AG04449 (cell line): ENCODE measurements at regions of chr14 and their contacts with region 1.

Region 1: GRCh38 chr14:23555882-23556699 is at the start of gene THTPA:
- DNase-seq: no peak
- H3K4me3 ChIP-seq: peak within 1 kb of the TSS; percentile 82
- CTCF ChIP-seq: no peak

Region 2: GRCh38 chr14:23478111-23478759 is 77.9 kb before region 1 on chr14:
- CTCF ChIA-PET with region 1: interaction called, 910 read pairs
- POLR2A ChIA-PET with region 1: interaction called, 5 read pairs
- DNase-seq: peak; percentile 33
- H3K4me3 ChIP-seq: no peak overlapping the region
- CTCF ChIP-seq: peak; percentile 50

Region 3: DNA sequence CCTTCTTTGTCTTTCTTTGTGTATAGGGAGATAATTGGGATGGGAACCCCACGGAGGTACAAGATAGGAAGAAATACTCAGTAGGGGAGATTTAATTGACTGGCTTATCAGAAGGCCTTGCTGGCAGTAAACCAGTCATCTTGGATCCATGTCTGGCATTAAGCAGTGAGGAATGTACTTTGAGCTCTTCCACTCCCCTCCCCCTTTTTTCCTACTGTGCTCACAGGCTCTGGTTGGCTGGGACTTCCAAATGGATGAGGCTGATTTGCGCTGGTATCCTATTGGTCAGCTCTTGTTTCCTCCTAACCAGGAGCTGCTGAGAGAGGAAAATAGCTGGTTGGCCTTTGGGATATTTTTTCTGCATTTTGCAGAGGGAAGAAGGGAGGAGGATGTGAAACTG is 61.9 kb before region 1 on chr14:
- CTCF ChIA-PET with region 1: interaction called, 910 read pairs
- POLR2A ChIA-PET with region 1: no interaction called
- DNase-seq: peak; percentile 31
- H3K4me3 ChIP-seq: no peak overlapping the region
- CTCF ChIP-seq: no peak

Region 4: GRCh38 chr14:23528555-23528954 is 27.5 kb before region 1 on chr14:
- CTCF ChIA-PET with region 1: interaction called, 15 read pairs
- POLR2A ChIA-PET with region 1: interaction called, 3 read pairs
- DNase-seq: no peak
- H3K4me3 ChIP-seq: no peak overlapping the region
- CTCF ChIP-seq: no peak

Region 5: GRCh38 chr14:23539248-23540140 is 16.6 kb before region 1 on chr14:
- CTCF ChIA-PET with region 1: interaction called, 49 read pairs
- POLR2A ChIA-PET with region 1: interaction called, 3 read pairs
- DNase-seq: no peak
- H3K4me3 ChIP-seq: no peak overlapping the region
- CTCF ChIP-seq: peak; percentile 64

Region 6: GRCh38 chr14:23567192-23568020 is 11.3 kb after region 1 on chr14 and contains the start of gene AP1G2:
- CTCF ChIA-PET with region 1: interaction called, 97 read pairs
- POLR2A ChIA-PET with region 1: interaction called, 5 read pairs
- DNase-seq: no peak
- H3K4me3 ChIP-seq: peak within 1 kb of the TSS; percentile 64
- CTCF ChIP-seq: no peak